T-cell (primary cell): ENCODE measurements at regions of chr16 and their contacts with region 1.

Region 1: GRCh38 chr16:67632415-67633172 is 12.3 kb upstream of the CARMIL2 start:
- DNase-seq: no peak
- ATAC-seq: no peak
- H3K4me3 ChIP-seq: no peak overlapping the region
- H3K4me3 Mint-ChIP-seq: no peak overlapping the region
- H3K27ac ChIP-seq: no peak overlapping the region
- H3K27ac Mint-ChIP-seq: peak overlapping the region in 1 of 2 donors; percentile 49
- H3K4me1 ChIP-seq: no peaks in the 10 kb centered on the region
- H3K4me1 Mint-ChIP-seq: no peaks in the 10 kb centered on the region
- H3K27me3 ChIP-seq: no peaks in the 10 kb centered on the region
- H3K27me3 Mint-ChIP-seq: no peaks in the 10 kb centered on the region

Region 2: GRCh38 chr16:67598527-67598926 is 34.1 kb before region 1 on chr16:
- CTCF ChIA-PET with region 1: interaction called in 1 of 2 experiments, 17 read pairs
- POLR2A ChIA-PET with region 1: no interaction called
- DNase-seq: no peak
- ATAC-seq: no peak
- H3K4me3 ChIP-seq: no peak overlapping the region
- H3K4me3 Mint-ChIP-seq: no peak overlapping the region
- H3K27ac ChIP-seq: no peak overlapping the region
- H3K27ac Mint-ChIP-seq: no peak overlapping the region
- H3K4me1 ChIP-seq: peaks cover 5 to 10% of the 10 kb centered on the region in 2 experiments
- H3K4me1 Mint-ChIP-seq: peaks cover 49 to 60% (median 57%) of the 10 kb centered on the region in 3 donors
- H3K27me3 ChIP-seq: no peaks in the 10 kb centered on the region
- H3K27me3 Mint-ChIP-seq: no peaks in the 10 kb centered on the region